ENCODE measurements at regions of chr11 and their contacts with region 1.

Region 1: DNA sequence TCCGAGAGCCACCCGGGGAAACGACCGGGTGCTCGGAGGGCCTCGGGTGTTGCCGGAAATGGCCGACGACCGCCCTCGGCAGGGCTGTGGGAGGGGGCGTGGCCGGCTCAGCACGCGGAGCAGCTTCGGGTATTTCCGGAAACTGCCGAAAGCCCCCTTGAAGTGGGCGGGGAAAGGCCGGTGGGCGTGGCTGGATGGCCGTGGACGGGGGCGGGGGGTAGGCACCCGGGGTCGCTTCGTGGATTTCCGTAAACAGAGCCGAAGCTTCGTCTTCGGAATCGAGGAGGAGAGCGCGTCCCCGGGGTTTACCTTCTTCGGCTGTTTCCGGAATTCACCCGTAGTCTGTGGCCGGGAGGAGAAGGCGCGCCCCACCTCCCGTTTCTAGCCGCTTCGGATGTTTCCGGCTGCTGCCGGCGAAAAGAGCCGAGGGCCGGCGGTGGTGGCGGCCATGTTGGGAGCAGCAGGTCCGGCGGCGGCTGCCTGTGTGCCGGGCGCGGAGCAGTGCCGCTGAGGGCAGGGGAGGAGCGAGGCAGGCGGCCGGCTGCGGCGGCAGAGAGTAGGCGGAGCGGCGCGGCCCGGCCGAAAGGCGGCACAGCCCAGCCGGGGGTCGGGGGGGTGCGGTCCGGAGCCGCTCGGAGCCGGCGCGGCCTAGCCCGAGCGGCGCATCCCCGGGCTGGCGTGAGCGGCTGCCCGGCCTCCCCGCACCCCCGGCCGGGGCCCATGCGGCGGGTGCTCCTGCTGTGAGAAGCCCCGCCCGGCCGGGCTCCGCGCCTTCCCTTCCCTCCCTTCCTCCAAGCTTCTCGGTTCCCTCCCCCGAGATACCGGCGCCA is at the start of gene MARK2:
- DNase-seq: peak; percentile 99
- H3K4me3 Mint-ChIP-seq: peak within 1 kb of the TSS; percentile 75
- H3K27ac Mint-ChIP-seq: peak within 1 kb of the TSS; percentile 38
- H3K4me1 Mint-ChIP-seq: peaks cover 48% of the 10 kb centered on the region
- H3K27me3 Mint-ChIP-seq: no peaks in the 10 kb centered on the region
- CTCF ChIP-seq: no peak
- total RNA-seq, gene MARK2: 63.1 and 71.2 TPM in 2 replicates

Region 2: DNA sequence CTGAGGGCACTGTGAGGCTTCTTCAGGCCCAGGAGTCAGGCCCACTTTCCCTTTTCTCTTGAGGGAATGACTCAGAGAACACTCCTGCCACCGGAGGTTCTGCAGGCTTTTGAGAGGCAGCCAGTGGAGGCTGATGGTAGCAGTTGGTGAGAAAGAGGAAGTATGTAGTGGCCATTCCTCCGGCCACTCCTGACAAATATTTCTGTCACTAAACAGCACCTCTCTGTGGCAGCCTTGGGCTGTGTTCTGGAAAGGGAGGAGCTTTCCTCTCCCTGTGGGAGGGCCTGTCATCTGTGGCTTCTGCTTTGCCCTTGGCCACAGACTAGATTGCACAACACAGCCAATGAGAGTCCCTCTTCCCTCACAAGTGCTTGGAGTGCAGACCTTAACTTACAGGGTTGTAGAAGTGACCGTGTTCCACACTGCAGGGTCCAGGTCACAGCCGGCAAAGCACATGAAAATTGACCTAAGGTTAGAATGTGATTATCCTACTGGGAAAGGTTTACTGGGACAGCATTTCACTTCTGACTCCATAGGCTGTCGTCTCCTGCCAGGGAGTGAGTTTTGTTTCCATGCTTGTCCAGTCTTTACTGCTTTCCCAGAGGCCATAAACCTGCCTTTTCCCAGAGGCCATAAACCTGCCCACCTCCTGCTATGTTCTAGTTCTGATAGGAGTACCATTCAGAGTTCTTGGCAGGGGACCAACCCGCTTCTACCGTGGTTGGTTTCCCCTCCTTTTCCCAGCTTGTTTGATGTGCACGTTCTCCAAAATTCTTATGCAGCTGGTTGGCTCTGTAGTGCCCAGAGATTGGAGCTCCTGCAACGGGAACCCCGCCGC is 33.3 kb after region 1 on chr11:
- CTCF ChIA-PET with region 1: interaction called, 15 read pairs
- intact Hi-C with region 1: loop called (anchors 2 kb)
- DNase-seq: peak; percentile 83
- H3K4me3 Mint-ChIP-seq: peak overlapping the region; percentile 39
- H3K27ac Mint-ChIP-seq: no peak overlapping the region
- H3K4me1 Mint-ChIP-seq: peaks cover 42% of the 10 kb centered on the region
- H3K27me3 Mint-ChIP-seq: no peaks in the 10 kb centered on the region
- CTCF ChIP-seq: no peak

Region 3: GRCh38 chr11:63888170-63889086 is 49.5 kb after region 1 on chr11:
- CTCF ChIA-PET with region 1: interaction called, 6 read pairs
- intact Hi-C with region 1: loop called (anchors 5 kb)
- DNase-seq: peak; percentile 64
- H3K4me3 Mint-ChIP-seq: peak overlapping the region; percentile 88
- H3K27ac Mint-ChIP-seq: peak overlapping the region; percentile 79
- H3K4me1 Mint-ChIP-seq: peaks cover 35% of the 10 kb centered on the region
- H3K27me3 Mint-ChIP-seq: no peaks in the 10 kb centered on the region
- CTCF ChIP-seq: no peak

Region 4: DNA sequence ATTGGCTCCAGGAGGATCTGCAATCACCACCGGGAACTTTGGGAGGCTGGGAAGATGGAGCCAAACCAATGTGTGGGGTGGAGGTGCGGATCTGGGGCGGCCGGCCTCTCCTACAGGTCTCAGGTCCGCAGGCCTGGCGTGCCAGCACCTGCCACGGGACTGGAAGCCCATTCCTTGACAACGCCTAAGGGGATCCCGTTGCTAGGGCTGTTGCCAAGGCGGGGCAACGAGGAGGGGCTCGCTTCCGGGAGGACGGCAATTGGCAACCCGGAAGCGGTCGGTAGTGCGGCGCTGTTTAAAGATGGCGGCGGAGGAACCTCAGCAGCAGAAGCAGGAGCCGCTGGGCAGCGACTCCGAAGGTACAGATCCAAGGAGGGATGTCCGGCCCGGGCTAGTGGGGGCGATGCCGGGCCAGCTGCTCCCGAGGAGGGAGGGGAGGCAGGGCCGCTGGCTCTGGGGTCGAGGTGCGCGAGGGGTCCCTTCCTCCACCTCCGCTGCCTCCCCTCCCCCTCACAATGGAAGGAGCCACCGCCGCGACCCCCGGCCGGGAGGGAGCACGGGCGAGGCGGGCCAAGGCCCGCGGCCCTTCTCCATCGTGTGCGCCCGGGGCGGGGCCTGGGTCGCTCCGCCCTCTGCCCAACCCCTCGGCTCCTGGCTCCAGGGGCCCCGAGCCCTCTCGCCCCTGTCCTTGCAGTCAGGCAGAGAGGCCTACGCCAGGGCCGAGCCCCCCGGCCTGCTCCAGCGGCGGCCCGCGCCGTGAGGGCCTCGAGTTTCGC is 147.5 kb after region 1 on chr11 and contains the start of gene OTUB1:
- CTCF ChIA-PET with region 1: no interaction called
- intact Hi-C with region 1: no loop called
- DNase-seq: peak; percentile 96
- H3K4me3 Mint-ChIP-seq: peak within 1 kb of the TSS; percentile 76
- H3K27ac Mint-ChIP-seq: peak within 1 kb of the TSS; percentile 77
- H3K4me1 Mint-ChIP-seq: peaks cover 22% of the 10 kb centered on the region
- H3K27me3 Mint-ChIP-seq: no peaks in the 10 kb centered on the region
- CTCF ChIP-seq: no peak
- total RNA-seq, gene OTUB1: 96.9 and 103 TPM in 2 replicates